PC-9 (cell line): ENCODE measurements at regions of chr3 and their contacts with region 1.

Region 1: GRCh38 chr3:133821767-133822638 is 16.4 kb downstream of the SRPRB start:
- DNase-seq: no peak
- H3K4me3 ChIP-seq: no peak overlapping the region
- H3K27ac ChIP-seq: no peak overlapping the region
- H3K4me1 ChIP-seq: no peaks in the 10 kb centered on the region
- H3K27me3 ChIP-seq: no peaks in the 10 kb centered on the region
- CTCF ChIP-seq: no peak

Region 2: GRCh38 chr3:133887803-133888559 is 66.0 kb after region 1 on chr3:
- CTCF ChIA-PET with region 1: no interaction called
- POLR2A ChIA-PET with region 1: no interaction called
- intact Hi-C with region 1: no loop called
- DNase-seq: no peak
- H3K4me3 ChIP-seq: no peak overlapping the region
- H3K27ac ChIP-seq: no peak overlapping the region
- H3K4me1 ChIP-seq: no peaks in the 10 kb centered on the region
- H3K27me3 ChIP-seq: 0 out of 2 replicates have a peak, but pooled peaks cover 3% of the 10 kb centered on the region
- CTCF ChIP-seq: no peak

Region 3: GRCh38 chr3:134485718-134486576 is 663.9 kb after region 1 on chr3 and contains the starts of genes ANAPC13 and CEP63:
- CTCF ChIA-PET with region 1: no interaction called
- POLR2A ChIA-PET with region 1: no interaction called
- intact Hi-C with region 1: loop called (anchors 5 kb)
- DNase-seq: peak; percentile 95
- H3K4me3 ChIP-seq: peak within 1 kb of the TSS; percentile 89
- H3K27ac ChIP-seq: peak within 1 kb of the TSS; percentile 73
- H3K4me1 ChIP-seq: peaks cover 27% of the 10 kb centered on the region
- H3K27me3 ChIP-seq: no peaks in the 10 kb centered on the region
- CTCF ChIP-seq: no peak
- total RNA-seq, gene ANAPC13: 52.7 and 61.8 TPM in 2 replicates
- total RNA-seq, gene CEP63: 28.5 and 31.5 TPM in 2 replicates